A549 (cell line): ENCODE measurements at regions of chr14 and their contacts with region 1.

Region 1: GRCh38 chr14:68248481-68249255 is 429.1 kb downstream of the RAD51B start:
- DNase-seq: peak; percentile 61 to 86
- ATAC-seq: peak; percentile 81 to 84
- H3K4me3 ChIP-seq: no peak overlapping the region
- H3K27ac ChIP-seq: peak overlapping the region; percentile 95 to 97
- H3K4me1 ChIP-seq: peaks cover 76% of the 10 kb centered on the region
- CTCF ChIP-seq: peak; percentile 83
- EP300 ChIP-seq: no peak
- POLR2A ChIP-seq: no peak
- RAD21 ChIP-seq: peak; percentile 93 to 97

Region 2: DNA sequence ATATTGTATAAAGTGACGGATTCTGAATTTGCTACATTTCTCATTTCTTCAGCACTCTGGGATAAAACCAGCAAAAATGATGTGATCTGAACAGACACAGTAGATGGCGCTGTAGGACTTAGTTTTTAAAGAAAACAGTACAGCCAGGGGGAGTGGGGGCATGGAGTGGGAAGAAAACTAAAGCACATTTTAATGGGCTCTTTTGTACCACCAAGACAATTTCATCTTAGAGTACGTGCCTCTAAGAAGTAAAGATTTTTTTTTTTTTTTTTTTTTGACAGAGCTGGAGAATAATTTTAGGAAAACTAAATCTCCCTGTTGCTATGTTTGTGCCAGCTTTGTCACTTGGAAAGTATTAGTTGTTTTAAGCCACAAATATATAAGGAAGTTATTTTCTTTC is 304.7 kb before region 1 on chr14:
- CTCF ChIA-PET with region 1: interaction called, 24 read pairs
- POLR2A ChIA-PET with region 1: interaction called, 3 read pairs
- DNase-seq: peak; percentile 44 to 92
- ATAC-seq: peak; percentile 88 to 89
- H3K4me3 ChIP-seq: no peak overlapping the region
- H3K27ac ChIP-seq: peak overlapping the region; percentile 82 to 86
- H3K4me1 ChIP-seq: peaks cover 51% of the 10 kb centered on the region
- CTCF ChIP-seq: peak; percentile 93
- EP300 ChIP-seq: peak in 1 of 2 experiments; percentile 18; a peak in 1 of 5 replicates
- POLR2A ChIP-seq: no peak
- RAD21 ChIP-seq: peak; percentile 96 to 98

Region 3: GRCh38 chr14:68232300-68233055 is 16.2 kb before region 1 on chr14:
- CTCF ChIA-PET with region 1: interaction called, 26 read pairs
- POLR2A ChIA-PET with region 1: interaction called, 5 read pairs
- DNase-seq: peak; percentile 77 to 98
- ATAC-seq: peak; percentile 96
- H3K4me3 ChIP-seq: no peak overlapping the region
- H3K27ac ChIP-seq: peak overlapping the region; percentile 95 to 96
- H3K4me1 ChIP-seq: peaks cover 62% of the 10 kb centered on the region
- CTCF ChIP-seq: no peak
- EP300 ChIP-seq: peak; percentile 92 to 98
- POLR2A ChIP-seq: no peak
- RAD21 ChIP-seq: peak; percentile 40 to 64

Region 4: DNA sequence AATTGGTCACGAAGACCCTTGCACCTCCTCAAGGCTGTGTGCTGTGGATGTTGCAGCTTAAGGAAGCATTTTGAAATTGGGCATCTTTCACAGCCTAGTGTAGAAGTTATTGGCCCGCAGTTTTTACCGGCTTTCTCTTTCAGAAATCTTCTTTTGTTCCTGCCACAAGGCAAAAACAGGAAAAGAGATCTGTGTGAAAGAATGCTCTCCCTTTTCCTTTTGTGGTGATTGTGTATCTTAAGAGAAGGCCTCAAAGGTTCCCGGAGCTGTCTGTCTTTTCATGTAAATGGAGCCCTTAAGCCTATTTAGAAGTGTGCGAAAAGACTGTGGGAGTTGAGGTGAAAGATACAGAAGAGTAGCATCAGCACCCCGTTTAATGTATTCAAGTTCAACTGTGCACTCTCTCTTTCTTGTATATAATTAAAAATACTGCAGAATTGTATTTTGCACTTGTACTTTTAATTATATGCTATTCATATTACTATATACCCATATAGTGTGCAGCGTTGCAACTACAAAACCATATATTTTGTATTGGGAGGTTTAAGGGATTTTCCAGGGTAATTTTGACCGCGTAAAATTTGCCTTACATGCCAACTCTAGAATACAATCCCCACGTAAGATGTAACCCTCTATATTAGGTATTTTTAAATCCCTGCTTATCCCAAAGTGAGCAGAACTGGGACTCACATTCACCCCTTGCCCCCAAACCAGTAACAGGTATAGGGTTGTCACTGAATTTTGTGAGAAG is 12.6 kb after region 1 on chr14:
- CTCF ChIA-PET with region 1: interaction called, 10 read pairs
- POLR2A ChIA-PET with region 1: no interaction called
- DNase-seq: no peak
- ATAC-seq: no peak
- H3K4me3 ChIP-seq: no peak overlapping the region
- H3K27ac ChIP-seq: peak overlapping the region in 1 of 2 experiments; percentile 50; a peak in 3 of 6 replicates
- H3K4me1 ChIP-seq: no peaks in the 10 kb centered on the region
- CTCF ChIP-seq: no peak
- EP300 ChIP-seq: no peak
- POLR2A ChIP-seq: no peak
- RAD21 ChIP-seq: no peak

Region 5: GRCh38 chr14:68282463-68283377 is 34.1 kb after region 1 on chr14:
- CTCF ChIA-PET with region 1: no interaction called
- POLR2A ChIA-PET with region 1: no interaction called
- DNase-seq: no peak
- ATAC-seq: no peak
- H3K4me3 ChIP-seq: no peak overlapping the region
- H3K27ac ChIP-seq: peak overlapping the region; percentile 49 to 59; a peak in 4 of 6 replicates
- H3K4me1 ChIP-seq: peaks cover 34% of the 10 kb centered on the region
- CTCF ChIP-seq: no peak
- EP300 ChIP-seq: no peak
- POLR2A ChIP-seq: no peak
- RAD21 ChIP-seq: no peak

Region 6: DNA sequence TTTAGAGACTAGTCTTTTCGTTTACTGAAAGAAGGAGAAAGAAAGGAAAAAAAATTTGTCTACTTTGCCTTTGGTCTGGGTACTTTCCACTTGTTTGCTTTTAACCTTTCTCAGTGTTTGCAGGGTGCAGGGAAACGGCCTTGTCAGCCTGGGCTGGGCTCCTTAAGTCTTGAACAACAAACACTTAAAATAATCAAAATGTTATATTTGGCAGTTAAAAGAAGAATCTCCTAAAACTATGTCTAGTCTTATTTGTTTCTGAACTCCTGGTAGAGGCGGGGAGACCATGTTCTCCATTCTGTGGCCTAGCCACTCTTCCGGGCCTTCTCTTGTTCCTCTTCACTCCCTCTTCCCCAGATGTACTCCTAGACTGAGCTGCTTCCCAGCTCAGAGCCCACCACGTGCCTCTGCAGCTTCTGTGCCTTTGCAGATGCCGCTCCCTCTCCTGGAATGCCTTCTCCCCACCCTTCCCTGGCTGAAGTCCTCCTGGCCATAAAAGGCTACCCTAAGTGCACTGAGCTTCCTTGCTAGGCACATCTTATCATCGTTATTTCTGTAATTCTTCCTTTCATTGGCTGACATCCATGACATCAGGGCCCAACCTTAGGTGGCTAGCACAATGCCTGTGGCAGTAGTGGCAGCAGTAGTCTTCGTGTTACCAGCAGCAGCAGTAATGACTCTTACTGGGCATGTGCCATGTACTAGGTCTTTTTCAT is 111.3 kb after region 1 on chr14:
- CTCF ChIA-PET with region 1: no interaction called
- POLR2A ChIA-PET with region 1: no interaction called
- DNase-seq: peak; percentile 22 to 78
- ATAC-seq: peak; percentile 33 to 74; a peak in 3 of 6 replicates
- H3K4me3 ChIP-seq: no peak overlapping the region
- H3K27ac ChIP-seq: peak overlapping the region; percentile 24 to 75
- H3K4me1 ChIP-seq: peaks cover 21% of the 10 kb centered on the region
- CTCF ChIP-seq: no peak
- EP300 ChIP-seq: no peak
- POLR2A ChIP-seq: no peak
- RAD21 ChIP-seq: no peak

Region 7: GRCh38 chr14:68377459-68377858 is 128.8 kb after region 1 on chr14:
- CTCF ChIA-PET with region 1: no interaction called
- POLR2A ChIA-PET with region 1: no interaction called
- DNase-seq: peak in 1 of 2 experiments; percentile 38
- ATAC-seq: no peak; a peak in 1 of 6 replicates
- H3K4me3 ChIP-seq: no peak overlapping the region
- H3K27ac ChIP-seq: peak overlapping the region; percentile 5 to 47; a peak in 3 of 6 replicates
- H3K4me1 ChIP-seq: peaks cover 18% of the 10 kb centered on the region; the same call in 2 of the 3 replicates
- CTCF ChIP-seq: no peak
- EP300 ChIP-seq: no peak
- POLR2A ChIP-seq: no peak
- RAD21 ChIP-seq: no peak